ENCODE measurements at regions of chr10 and their contacts with region 1.

Region 1: DNA sequence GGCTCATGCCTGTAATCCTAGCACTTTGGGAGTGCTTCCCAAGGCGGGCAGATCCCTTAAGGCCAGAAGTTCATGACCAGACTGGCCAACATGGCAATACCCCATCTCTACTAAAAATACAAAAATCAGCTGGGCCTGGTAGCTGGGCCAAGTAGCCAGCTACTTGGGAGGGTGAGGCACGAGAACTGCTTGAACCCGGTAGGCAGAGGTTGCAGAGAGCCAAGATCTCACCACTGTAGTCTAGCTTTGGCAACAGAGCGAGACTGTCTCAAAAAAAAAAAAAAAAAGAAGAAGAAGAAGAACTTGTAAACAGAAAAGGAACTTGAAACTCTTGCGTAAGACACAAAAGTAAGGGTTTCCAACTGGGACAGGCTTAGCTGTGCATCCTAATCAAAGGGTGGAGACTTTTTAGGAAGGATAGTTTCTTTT is 5.6 kb upstream of the IFIT2 start:
- DNase-seq: peak in 1 of 2 donors; percentile 74
- ATAC-seq: peak; percentile 80 to 94 (median 90)
- H3K4me3 ChIP-seq: peak overlapping the region; percentile 40
- H3K27ac ChIP-seq: peak overlapping the region; percentile 80
- H3K4me1 ChIP-seq: peaks cover 29% of the 10 kb centered on the region
- H3K27me3 ChIP-seq: no peaks in the 10 kb centered on the region
- CTCF ChIP-seq: no peak

Region 2: DNA sequence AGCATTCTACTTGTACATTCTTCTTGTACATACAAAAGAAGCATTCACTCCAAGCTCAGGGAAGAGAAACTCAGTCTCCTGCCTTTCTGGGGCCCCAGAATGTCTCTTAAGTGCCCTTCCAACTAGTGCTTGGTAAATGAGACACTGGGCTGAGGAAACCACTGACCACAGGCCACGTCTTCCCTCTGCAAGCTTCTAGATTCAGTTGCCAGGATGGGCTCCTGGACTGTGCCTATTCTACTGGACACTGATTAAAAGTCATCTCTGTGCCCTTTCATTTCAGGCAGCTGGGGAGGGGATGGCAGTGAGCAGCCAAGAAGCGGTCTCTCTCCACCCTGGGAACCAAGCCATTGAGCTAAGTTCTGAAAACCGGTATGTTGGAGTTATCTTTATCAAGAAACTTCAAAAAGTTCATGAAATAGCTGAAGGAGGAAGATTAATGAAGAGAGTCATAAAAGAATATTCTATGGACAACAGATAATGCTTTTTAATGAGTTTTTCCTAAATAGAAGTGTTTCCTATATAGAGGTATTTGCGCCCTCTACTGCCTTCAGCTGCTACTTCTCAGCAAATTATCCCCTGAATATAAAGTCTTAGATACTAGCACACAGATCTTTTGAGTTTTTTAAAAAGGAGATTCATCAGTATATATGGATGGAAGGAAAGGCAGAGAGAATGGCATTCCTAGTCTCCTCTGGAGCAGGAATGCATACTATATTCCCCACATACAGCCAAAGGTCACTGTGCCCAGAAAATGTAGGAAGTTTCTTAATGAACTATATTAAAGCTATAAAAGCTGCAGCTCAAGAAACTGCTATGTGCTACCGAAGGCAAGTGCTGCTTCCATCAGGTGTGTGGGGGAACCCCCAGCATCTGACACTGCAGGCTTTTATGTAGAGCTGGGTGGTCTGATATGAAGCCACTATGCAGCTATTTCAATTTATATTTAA is 73.2 kb after region 1 on chr10:
- intact Hi-C with region 1: loop called in 1 of 2 experiments (anchors 5 kb)
- DNase-seq: no peak
- ATAC-seq: peak in 3 of 4 donors; percentile 34 to 50 (median 47)
- H3K4me3 ChIP-seq: no peak overlapping the region
- H3K27ac ChIP-seq: no peak overlapping the region
- H3K4me1 ChIP-seq: peaks cover 13% of the 10 kb centered on the region
- H3K27me3 ChIP-seq: no peaks in the 10 kb centered on the region
- CTCF ChIP-seq: peak; percentile 46

Region 3: GRCh38 chr10:89374713-89375141 is 78.5 kb after region 1 on chr10:
- intact Hi-C with region 1: loop called (anchors 5 kb)
- DNase-seq: no peak
- ATAC-seq: peak; percentile 20 to 46 (median 33)
- H3K4me3 ChIP-seq: no peak overlapping the region
- H3K27ac ChIP-seq: peak overlapping the region; percentile 84
- H3K4me1 ChIP-seq: peaks cover 20% of the 10 kb centered on the region
- H3K27me3 ChIP-seq: no peaks in the 10 kb centered on the region
- CTCF ChIP-seq: no peak

Region 4: DNA sequence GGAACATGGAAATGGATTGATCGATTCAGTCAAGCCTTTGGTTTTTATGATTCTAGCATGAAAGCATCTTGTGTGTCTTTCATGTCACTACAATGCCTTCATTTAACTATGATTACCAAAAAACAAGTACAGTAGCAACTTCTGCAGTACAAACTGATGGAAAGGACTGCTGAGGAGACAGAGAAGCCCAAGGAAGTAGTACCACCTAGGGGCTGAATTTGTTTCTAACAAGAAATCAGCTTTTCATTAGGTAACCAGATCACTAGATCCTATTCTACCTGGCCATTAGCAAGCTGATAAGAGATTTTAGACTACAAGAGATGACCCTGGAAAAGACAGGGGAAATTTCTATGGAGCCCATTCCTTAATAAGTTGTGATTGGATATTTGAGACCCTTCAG is 93.0 kb after region 1 on chr10:
- intact Hi-C with region 1: loop called in 1 of 2 experiments (anchors 5 kb)
- DNase-seq: no peak
- ATAC-seq: no peak
- H3K4me3 ChIP-seq: no peak overlapping the region
- H3K27ac ChIP-seq: no peak overlapping the region
- H3K4me1 ChIP-seq: peaks cover 37% of the 10 kb centered on the region
- H3K27me3 ChIP-seq: no peaks in the 10 kb centered on the region
- CTCF ChIP-seq: peak; percentile 45

Region 5: DNA sequence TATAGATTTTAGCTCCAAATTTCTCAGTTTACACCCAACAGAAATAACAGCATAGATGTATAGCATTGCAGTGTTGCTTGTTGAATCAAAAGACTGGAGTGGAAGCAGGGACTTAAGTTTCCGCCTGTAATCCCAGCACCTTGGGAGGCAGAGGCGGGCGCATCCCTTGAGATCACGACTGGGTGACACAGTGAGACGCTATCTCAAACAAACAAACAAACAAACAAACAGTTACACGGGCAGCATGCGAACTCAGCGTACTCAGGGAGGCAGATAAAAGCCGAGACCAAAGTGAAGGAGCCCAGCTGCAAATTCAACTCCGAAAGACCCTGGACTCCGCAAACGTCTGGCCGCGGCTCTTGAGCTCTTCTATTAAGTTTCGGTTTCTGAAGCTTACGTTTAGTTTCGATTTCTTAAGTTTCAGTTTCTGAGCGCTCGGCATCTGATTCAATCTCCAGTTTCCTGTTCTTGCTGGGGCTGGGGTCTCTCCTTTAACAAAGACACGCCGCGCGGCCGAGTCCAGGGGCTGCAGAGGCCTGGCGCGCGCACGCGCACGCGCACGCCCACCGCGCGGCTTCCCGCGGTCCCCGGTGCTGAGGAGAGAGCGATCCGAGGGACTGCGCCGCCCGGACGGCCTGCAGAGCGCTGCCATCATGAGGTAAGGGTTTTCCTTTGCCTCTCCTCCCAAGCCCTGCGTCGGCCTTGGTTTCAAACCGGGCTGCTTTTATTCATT is 118.1 kb after region 1 on chr10 and contains the start of gene IFIT5:
- intact Hi-C with region 1: loop called in 1 of 2 experiments (anchors 2 kb)
- DNase-seq: peak; percentile 76 to 83
- ATAC-seq: peak; percentile 91 to 95 (median 93)
- H3K4me3 ChIP-seq: peak within 1 kb of the TSS; percentile 85
- H3K27ac ChIP-seq: peak within 1 kb of the TSS; percentile 82
- H3K4me1 ChIP-seq: peaks cover 6% of the 10 kb centered on the region
- H3K27me3 ChIP-seq: no peaks in the 10 kb centered on the region
- CTCF ChIP-seq: no peak
- total RNA-seq, gene IFIT5: 2.8 to 6.9 (median 3.9) TPM

Region 6: GRCh38 chr10:89643431-89644331 is 347.4 kb after region 1 on chr10:
- intact Hi-C with region 1: loop called in 1 of 2 experiments (anchors 10 kb)
- DNase-seq: peak; percentile 60 to 84
- ATAC-seq: peak; percentile 71 to 83 (median 78)
- H3K4me3 ChIP-seq: peak overlapping the region; percentile 94
- H3K27ac ChIP-seq: peak overlapping the region; percentile 93
- H3K4me1 ChIP-seq: peaks cover 51% of the 10 kb centered on the region
- H3K27me3 ChIP-seq: no peaks in the 10 kb centered on the region
- CTCF ChIP-seq: no peak